HepG2 (cell line): ENCODE measurements at regions of chr6 and their contacts with region 1.

Region 1: GRCh38 chr6:41683510-41684310 is 45.4 kb downstream of the MDFI start:
- DNase-seq: peak; percentile 57
- ATAC-seq: peak; percentile 87
- H3K4me3 ChIP-seq: peak overlapping the region in 2 of 3 experiments; percentile 36 to 60; a peak in 4 of 6 replicates
- H3K27ac ChIP-seq: no peak overlapping the region
- H3K4me1 ChIP-seq: peaks cover 26% of the 10 kb centered on the region
- H3K27me3 ChIP-seq: peaks cover 7 to 23% of the 10 kb centered on the region in 2 experiments; a peak in 3 of 5 replicates
- CTCF ChIP-seq: peak; percentile 100
- EP300 ChIP-seq: no peak
- POLR2A ChIP-seq: no peak
- RAD21 ChIP-seq: peak; percentile 97

Region 2: DNA sequence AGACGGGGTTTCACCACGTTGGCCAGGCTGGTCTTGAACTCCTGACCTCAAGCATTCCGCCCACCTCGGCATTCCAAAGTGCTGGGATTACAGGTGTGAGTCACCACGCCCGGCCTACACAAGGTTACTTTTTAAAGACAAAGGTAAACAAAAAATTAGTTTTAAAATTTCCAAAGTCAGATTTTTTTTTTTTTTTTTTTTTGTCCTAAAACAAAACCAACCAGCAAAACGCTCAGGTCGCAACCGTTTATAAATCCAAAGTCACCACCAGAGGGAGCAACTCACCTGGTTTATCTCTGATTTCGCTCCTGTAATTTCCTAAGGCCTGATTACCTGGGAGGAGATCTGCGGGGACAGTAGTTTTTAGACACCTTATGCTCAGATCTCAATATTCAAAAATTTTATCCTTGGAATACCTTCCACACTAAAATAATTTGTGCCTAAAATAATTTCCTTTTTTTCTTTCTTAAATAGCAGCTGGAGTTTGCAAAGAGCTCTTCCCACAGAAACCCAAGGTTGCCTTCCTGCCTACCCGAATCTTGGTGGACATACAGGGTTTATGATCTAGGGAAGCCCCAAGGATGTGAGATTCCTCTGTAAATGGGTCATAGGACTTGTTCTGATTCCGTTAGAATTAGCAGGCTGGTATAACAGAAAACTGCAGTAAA is 377.4 kb before region 1 on chr6:
- CTCF ChIA-PET with region 1: interaction called, 3 read pairs
- POLR2A ChIA-PET with region 1: no interaction called
- in situ Hi-C with region 1: no loop called
- intact Hi-C with region 1: loop called (anchors 5 kb)
- DNase-seq: peak; percentile 70
- ATAC-seq: peak; percentile 69
- H3K4me3 ChIP-seq: no peak overlapping the region
- H3K27ac ChIP-seq: no peak overlapping the region
- H3K4me1 ChIP-seq: peaks cover 6% of the 10 kb centered on the region
- H3K27me3 ChIP-seq: peaks cover 2 to 23% of the 10 kb centered on the region in 2 experiments; a peak in 3 of 5 replicates
- CTCF ChIP-seq: peak; percentile 69
- EP300 ChIP-seq: no peak
- POLR2A ChIP-seq: no peak
- RAD21 ChIP-seq: no peak

Region 3: GRCh38 chr6:41602864-41603608 is 80.7 kb before region 1 on chr6:
- CTCF ChIA-PET with region 1: interaction called, 113 read pairs
- POLR2A ChIA-PET with region 1: interaction called, 3 read pairs
- in situ Hi-C with region 1: loop called (anchors 5 kb)
- intact Hi-C with region 1: loop called (anchors 1 kb)
- DNase-seq: peak; percentile 86
- ATAC-seq: peak; percentile 68
- H3K4me3 ChIP-seq: no peak overlapping the region
- H3K27ac ChIP-seq: no peak overlapping the region
- H3K4me1 ChIP-seq: peaks cover 7% of the 10 kb centered on the region
- H3K27me3 ChIP-seq: peaks cover 3 to 12% of the 10 kb centered on the region in 2 experiments
- CTCF ChIP-seq: peak; percentile 97
- EP300 ChIP-seq: no peak
- POLR2A ChIP-seq: no peak
- RAD21 ChIP-seq: peak; percentile 92

Region 4: DNA sequence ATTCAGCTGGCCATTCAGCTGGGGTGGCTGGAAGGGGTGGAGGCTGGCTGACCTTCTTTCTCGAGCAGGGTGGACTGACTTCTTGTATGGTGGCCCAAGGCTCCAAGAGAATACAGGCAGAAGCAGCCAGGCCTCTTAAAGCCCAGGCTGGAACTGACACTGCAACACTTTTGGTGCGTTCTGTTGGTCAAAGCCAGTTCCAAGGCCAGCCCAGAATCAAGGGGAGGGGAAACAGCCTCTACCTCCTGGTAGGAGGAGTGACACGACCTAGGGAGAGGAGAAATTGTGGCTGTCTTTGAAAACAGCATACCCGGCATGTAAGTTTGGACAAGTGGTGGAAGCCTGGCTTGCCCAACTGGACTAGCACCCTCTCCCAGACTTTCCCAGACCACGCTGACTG is 65.6 kb before region 1 on chr6:
- CTCF ChIA-PET with region 1: no interaction called
- POLR2A ChIA-PET with region 1: no interaction called
- in situ Hi-C with region 1: no loop called
- intact Hi-C with region 1: no loop called
- DNase-seq: no peak
- ATAC-seq: no peak; the same call in 2 of the 3 replicates
- H3K4me3 ChIP-seq: no peak overlapping the region
- H3K27ac ChIP-seq: no peak overlapping the region
- H3K4me1 ChIP-seq: peaks cover 17% of the 10 kb centered on the region
- H3K27me3 ChIP-seq: peaks cover 0 to 19% of the 10 kb centered on the region in 2 experiments; a peak in 2 of 5 replicates
- CTCF ChIP-seq: no peak
- EP300 ChIP-seq: no peak
- POLR2A ChIP-seq: no peak
- RAD21 ChIP-seq: no peak